GM18951 (cell line): ENCODE measurements at regions of chr17 and their contacts with region 1.

Region 1: DNA sequence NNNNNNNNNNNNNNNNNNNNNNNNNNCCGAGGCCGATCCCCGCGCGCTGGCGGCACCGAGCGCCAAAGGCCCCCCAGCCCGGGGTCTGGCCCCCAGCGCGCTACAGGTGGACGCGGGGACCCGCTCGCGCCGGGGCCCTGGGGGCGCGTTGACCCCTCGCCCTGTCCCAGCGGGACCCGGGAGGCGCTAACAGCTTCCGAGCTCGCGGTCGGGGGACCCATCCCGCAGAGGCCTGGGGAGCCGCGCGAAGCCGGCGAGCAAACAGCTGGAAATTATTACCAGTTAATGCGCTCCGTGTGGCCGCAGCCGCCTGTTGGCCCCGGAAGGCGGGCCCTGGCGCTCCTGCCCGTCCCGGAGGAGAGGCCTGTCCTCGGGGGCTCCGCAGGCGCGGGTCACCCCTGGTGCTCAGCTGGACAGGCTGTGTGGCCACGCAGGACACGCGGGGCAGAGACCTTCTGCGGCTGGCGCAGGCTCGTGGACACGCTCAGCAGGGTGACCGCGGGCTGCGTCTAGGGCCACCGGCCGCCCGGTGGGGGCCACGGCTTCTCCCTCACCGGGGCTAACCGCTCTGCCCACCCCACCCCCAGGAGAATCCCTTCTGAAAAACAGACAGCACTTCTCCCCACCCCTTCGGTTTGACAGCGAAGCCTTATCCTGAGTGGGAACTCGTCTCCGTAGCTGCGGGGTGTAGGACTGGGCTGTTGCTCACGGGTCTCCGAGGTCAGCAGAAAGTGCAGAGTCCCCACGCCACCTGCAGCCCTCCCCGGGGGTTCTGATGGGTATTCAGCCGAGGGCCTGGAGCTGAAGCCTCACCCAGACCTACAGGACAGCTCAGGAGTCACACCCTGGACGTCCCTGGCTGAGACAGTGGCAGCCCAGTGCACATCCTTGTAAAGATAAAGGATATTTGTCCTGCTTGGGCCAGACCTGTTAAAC is 138.7 kb upstream of the RPH3AL start:
- POLR2A ChIP-seq: no peak

Region 2: DNA sequence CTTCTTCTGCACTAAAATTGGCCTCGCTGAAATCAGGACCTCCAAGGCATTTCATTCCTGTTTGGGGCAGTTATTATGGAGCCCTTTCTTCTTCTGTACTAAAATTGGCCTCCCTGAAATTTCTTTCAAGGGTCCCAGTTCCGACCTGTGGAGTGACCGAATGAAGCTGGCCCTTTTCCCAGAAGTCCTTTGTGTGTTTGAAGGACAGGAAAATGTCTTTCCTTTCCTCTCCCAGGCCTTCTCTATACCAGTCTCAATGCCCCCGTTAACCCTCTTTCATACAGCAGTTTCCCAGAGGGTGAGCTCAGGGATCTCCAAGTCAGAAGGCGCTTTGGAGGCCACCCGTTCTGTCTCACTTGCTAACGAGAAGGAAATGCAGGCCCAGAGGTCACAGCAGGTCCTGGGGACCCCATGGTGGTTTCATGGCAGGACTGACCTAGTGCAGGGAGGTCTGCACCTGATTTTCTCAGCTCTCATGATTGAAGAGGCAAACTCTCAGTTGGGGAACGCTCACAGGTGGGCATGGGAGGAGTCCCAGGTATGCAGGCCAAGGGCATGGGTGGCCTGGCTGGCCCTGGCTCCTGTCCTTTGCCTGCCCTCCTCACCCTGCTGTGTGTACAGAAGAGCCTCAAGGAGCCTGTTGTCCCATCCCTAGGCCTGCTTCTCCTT is 272.8 kb before region 1 on chr17:
- in situ Hi-C with region 1: no loop called
- POLR2A ChIP-seq: no peak

Region 3: DNA sequence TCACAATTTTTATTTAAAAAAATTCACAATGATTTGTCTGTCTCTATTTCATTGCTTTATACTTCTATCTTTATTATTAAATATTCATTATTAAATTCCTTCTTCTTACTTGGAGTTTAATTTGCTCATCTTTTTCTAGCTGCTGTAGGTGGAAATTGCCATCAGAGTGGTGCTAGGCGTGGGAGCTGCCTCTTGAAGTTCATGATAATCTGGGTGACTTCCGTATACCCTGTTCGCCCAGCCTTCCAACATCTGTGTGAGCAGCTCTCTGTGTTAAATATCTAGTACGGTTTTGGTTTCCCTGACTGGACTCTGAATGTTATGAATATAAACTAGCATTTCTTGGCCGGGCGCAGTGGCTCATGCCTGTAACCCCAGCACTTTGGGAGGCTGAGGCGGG is 54.8 kb before region 1 on chr17:
- in situ Hi-C with region 1: loop called (anchors 5 kb)
- POLR2A ChIP-seq: no peak

Region 4: DNA sequence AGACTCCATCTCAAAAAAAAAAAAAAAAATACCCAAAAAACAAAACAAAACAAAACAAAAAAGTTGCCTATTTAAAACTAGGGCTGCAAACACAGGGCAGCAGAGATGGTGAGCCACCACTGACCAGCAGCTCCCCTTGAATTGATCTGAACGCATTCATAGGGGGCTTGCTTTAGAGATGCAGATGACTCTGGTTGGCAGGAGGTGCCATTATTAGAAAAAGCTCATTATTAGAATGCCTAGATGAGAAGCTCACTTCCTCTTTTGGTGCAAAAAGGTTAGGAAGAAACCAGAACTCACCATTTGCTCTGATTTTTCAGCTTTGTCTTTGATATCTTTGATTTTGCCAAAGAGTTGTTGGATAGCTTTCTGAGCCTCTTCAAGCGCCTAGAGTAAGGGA is 170.2 kb after region 1 on chr17:
- in situ Hi-C with region 1: no loop called
- POLR2A ChIP-seq: no peak